Caco-2 (cell line): ENCODE measurements at regions of chr1 and their contacts with region 1.

Region 1: DNA sequence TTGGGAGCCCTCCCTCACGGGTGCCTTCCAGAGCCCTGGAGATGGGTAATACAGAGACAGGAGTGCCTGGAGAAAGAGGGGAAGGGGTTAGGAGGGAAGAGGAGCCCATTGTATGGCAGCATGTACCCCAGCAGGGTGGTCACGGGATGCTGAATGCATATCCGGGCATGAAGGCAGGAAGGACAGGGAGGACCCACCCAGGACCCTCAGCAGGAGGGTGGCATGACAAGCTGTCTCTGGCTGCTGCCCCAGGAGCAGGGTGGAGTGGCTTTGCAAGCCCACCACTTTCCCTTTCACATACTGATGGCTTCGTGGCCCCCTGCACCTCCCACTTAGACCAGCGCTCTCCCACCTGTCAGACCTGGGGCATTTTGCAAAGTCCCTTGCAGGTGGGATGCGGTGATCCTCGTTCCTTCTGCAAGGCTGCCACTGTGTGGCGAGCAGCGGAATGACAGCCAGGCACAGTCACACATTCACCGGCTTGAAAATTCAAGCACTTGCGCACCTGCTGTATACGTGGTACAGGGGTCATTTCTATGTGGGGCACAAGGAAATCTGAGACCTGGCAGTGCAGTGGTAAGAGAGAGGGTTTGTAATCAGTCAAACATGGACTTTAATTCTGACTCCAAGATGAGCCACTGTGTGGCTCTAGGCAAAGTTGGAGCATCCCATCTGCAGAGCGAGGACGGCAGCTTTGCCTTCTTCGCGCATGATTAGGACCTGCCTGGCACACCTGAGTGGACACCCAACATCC is 53.2 kb upstream of the TMEM51 start:
- DNase-seq: peak; percentile 61 to 72
- H3K4me3 ChIP-seq: no peak overlapping the region
- H3K4me3 Mint-ChIP-seq: no peak overlapping the region
- H3K27ac Mint-ChIP-seq: no peak overlapping the region
- H3K4me1 ChIP-seq: 0 out of 2 replicates have a peak, but pooled peaks cover 5% of the 10 kb centered on the region
- H3K4me1 Mint-ChIP-seq: peaks cover 10% of the 10 kb centered on the region
- H3K27me3 ChIP-seq: no peaks in the 10 kb centered on the region; the same call in none of the 2 replicates
- H3K27me3 Mint-ChIP-seq: peaks cover 21% of the 10 kb centered on the region
- CTCF ChIP-seq: peak; percentile 82 to 88

Region 2: GRCh38 chr1:13960375-13960987 is 1139.8 kb before region 1 on chr1:
- CTCF ChIA-PET with region 1: no interaction called
- POLR2A ChIA-PET with region 1: no interaction called
- intact Hi-C with region 1: loop called (anchors 10 kb)
- DNase-seq: peak; percentile 54 to 68
- H3K4me3 ChIP-seq: no peak overlapping the region
- H3K4me3 Mint-ChIP-seq: no peak overlapping the region
- H3K27ac Mint-ChIP-seq: no peak overlapping the region
- H3K4me1 ChIP-seq: no peaks in the 10 kb centered on the region
- H3K4me1 Mint-ChIP-seq: no peaks in the 10 kb centered on the region
- H3K27me3 ChIP-seq: no peaks in the 10 kb centered on the region
- H3K27me3 Mint-ChIP-seq: peaks cover 10% of the 10 kb centered on the region
- CTCF ChIP-seq: peak; percentile 74 to 86

Region 3: GRCh38 chr1:14778898-14779865 is 321.1 kb before region 1 on chr1:
- CTCF ChIA-PET with region 1: no interaction called
- POLR2A ChIA-PET with region 1: no interaction called
- intact Hi-C with region 1: loop called (anchors 5 kb)
- DNase-seq: peak in 1 of 2 experiments; percentile 53
- H3K4me3 ChIP-seq: no peak overlapping the region
- H3K4me3 Mint-ChIP-seq: no peak overlapping the region
- H3K27ac Mint-ChIP-seq: no peak overlapping the region
- H3K4me1 ChIP-seq: no peaks in the 10 kb centered on the region
- H3K4me1 Mint-ChIP-seq: no peaks in the 10 kb centered on the region
- H3K27me3 ChIP-seq: no peaks in the 10 kb centered on the region; the same call in 1 of the 2 replicates
- H3K27me3 Mint-ChIP-seq: no peaks in the 10 kb centered on the region
- CTCF ChIP-seq: peak; percentile 47 to 52

Region 4: DNA sequence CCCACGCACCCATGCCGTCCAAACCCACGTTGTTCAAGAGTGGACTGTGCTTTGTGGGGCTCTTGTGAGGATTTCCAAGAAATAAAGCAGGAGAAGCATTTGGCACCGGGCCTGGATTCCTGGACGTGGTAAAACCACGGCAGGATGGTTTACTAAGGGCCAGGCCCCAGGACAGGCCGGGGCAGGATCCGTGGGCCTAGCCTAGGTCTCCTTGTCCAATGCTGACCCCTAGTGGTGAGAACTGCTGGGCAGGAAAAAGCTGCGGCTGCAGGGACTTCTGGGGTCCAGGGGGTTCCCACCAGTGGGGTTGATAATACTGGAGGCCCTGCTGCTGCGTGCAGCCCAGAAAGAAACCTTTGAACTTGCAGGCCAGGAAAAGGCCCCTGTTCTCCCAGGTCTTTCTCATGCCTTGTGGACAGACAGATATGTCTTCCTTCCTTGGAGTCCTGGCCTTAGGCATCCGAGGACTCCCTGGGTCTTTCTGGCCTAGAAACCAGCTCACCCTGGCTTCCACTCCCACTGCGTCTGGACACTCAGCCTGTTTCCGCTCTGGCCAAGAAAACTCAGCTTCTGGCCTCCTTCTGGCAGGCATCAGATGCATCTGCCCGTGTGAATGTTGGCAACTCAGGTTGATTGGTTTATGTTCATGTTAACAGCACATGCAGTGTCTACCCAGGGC is 53.7 kb before region 1 on chr1:
- CTCF ChIA-PET with region 1: no interaction called
- POLR2A ChIA-PET with region 1: no interaction called
- intact Hi-C with region 1: loop called (anchors 5 kb)
- DNase-seq: peak; percentile 58 to 77
- H3K4me3 ChIP-seq: no peak overlapping the region
- H3K4me3 Mint-ChIP-seq: no peak overlapping the region
- H3K27ac Mint-ChIP-seq: no peak overlapping the region
- H3K4me1 ChIP-seq: no peaks in the 10 kb centered on the region
- H3K4me1 Mint-ChIP-seq: no peaks in the 10 kb centered on the region
- H3K27me3 ChIP-seq: no peaks in the 10 kb centered on the region
- H3K27me3 Mint-ChIP-seq: no peaks in the 10 kb centered on the region
- CTCF ChIP-seq: peak; percentile 81 to 83

Region 5: GRCh38 chr1:15062479-15063099 is 37.7 kb before region 1 on chr1:
- CTCF ChIA-PET with region 1: no interaction called
- POLR2A ChIA-PET with region 1: no interaction called
- intact Hi-C with region 1: loop called (anchors 1 kb)
- DNase-seq: peak in 1 of 2 experiments; percentile 18
- H3K4me3 ChIP-seq: no peak overlapping the region
- H3K4me3 Mint-ChIP-seq: no peak overlapping the region
- H3K27ac Mint-ChIP-seq: no peak overlapping the region
- H3K4me1 ChIP-seq: no peaks in the 10 kb centered on the region
- H3K4me1 Mint-ChIP-seq: no peaks in the 10 kb centered on the region
- H3K27me3 ChIP-seq: no peaks in the 10 kb centered on the region
- H3K27me3 Mint-ChIP-seq: no peaks in the 10 kb centered on the region
- CTCF ChIP-seq: peak in 1 of 2 experiments; percentile 54